Activated CD4-positive, alpha-beta memory T cell treated with anti-CD3 and anti-CD28 coated beads, Interleukin-2, amount 10 ng/mL, durations not matched to agents 7 days and 5 days (primary cell): ENCODE measurements at regions of chr3 and their contacts with region 1.

Region 1: DNA sequence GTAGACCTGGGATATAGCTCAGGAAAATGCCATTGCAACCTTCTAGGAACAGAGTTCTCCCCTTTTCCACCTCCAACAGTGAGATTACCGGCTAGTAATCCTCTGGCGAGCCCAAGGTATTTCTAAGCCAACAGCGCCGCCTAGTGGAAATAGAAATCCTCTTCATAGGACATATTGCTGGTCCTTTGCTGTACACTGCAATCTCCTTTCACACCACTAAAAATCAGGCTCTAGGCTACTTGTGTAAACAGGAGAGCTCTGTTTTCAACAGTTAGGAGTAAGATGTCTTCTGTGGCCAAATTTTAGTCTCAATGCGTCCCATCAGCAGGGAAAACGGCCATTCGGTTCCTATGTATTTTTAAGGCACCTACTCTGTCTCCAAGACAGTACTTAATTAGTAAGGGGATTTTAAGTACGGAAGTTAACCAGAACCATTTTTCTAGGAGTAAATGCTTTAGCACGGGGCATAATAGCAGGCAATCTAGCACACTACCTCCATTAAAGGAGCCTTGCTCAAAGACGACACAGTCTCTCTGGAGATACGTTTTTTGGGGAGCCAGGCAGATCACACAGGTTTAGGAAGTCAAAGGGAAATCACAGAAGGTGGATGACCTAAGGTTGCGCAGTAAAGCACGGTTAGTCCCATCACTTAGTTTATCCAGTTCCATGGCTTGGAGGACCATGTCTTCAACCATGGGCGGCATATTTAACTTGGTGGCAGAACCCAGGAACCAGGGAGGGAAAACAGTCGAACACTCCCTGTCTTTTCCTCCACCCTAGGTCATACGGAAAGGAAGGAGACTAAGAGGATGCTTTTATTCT is 43.8 kb downstream of the NCEH1 start:
- DNase-seq: peak; percentile 84
- H3K4me3 Mint-ChIP-seq: no peak overlapping the region
- H3K27ac Mint-ChIP-seq: no peak overlapping the region
- H3K4me1 Mint-ChIP-seq: peaks cover 22% of the 10 kb centered on the region
- H3K27me3 Mint-ChIP-seq: no peaks in the 10 kb centered on the region

Region 2: DNA sequence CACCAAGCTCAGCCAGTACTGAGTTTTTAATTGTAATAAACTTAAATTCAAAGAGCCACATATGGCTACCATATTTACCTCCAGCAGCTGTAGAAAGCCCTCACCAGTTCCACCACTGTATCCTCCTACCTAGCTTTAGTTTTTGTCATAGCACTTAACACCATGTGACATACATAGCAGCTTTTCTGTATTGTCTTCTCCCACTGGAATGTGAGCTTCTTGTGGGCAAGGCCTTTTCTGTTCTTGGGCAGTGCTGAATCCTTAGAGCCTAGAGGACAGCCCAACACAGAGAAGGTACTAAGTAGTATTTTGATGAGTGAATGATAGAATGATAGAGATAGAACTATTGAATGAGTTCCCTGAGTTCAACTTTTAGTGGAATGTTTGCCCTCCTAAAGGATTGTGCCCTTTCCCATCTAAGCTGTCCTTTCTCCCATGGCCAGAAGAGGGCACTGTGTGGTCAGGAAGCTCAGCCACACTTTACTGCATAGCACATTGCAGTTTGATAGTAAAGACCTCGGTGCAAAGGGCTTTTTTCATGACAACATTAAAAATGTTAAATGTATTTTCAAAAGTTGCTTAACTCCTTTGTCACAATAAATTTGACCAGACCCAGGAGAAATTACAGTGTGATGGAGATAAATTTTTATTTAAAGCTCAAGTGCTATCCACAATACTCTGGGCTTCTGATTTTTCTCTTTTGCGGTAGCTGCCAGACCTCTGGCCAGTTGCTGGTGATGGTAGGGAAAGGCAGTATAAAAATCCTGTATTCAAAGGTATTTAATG is 334.6 kb before region 1 on chr3:
- CTCF ChIA-PET with region 1: interaction called, 38 read pairs
- POLR2A ChIA-PET with region 1: no interaction called
- DNase-seq: peak; percentile 55
- H3K4me3 Mint-ChIP-seq: no peak overlapping the region
- H3K27ac Mint-ChIP-seq: no peak overlapping the region
- H3K4me1 Mint-ChIP-seq: peaks cover 10% of the 10 kb centered on the region
- H3K27me3 Mint-ChIP-seq: no peaks in the 10 kb centered on the region

Region 3: GRCh38 chr3:172341482-172342059 is 325.5 kb before region 1 on chr3:
- CTCF ChIA-PET with region 1: interaction called, 44 read pairs
- POLR2A ChIA-PET with region 1: no interaction called
- DNase-seq: no peak
- H3K4me3 Mint-ChIP-seq: no peak overlapping the region
- H3K27ac Mint-ChIP-seq: no peak overlapping the region
- H3K4me1 Mint-ChIP-seq: no peaks in the 10 kb centered on the region
- H3K27me3 Mint-ChIP-seq: no peaks in the 10 kb centered on the region

Region 4: DNA sequence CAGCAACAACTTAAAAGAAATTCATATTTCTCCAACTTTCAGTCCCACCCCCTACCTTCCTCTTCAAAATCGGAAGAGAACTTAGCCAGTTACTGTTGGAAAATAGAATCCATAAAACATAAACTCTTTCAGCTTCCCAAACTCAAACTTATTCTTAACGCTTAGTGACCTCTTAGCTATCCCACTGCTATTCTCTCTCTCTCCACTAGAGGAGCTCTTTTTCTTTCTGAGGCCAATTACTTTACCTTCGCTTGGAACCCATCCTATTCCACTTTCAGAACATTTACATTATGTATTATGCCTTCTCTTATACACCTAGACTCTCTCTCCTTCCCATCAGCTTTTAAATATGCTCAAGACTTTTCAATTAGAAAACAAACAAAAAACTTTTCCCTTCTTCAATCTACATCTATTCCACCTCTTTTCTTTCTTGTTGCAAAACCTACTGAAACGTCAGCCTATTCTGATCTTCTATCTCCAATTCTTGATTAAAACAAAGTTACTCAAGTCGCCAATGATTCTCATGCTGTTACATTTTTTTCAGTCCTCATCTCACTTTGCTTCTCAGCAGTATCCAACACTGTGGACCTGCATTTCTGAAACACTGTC is 205.4 kb before region 1 on chr3:
- CTCF ChIA-PET with region 1: interaction called, 21 read pairs
- POLR2A ChIA-PET with region 1: no interaction called
- DNase-seq: no peak
- H3K4me3 Mint-ChIP-seq: no peak overlapping the region
- H3K27ac Mint-ChIP-seq: no peak overlapping the region
- H3K4me1 Mint-ChIP-seq: peaks cover 4% of the 10 kb centered on the region
- H3K27me3 Mint-ChIP-seq: peaks cover 4% of the 10 kb centered on the region

Region 5: GRCh38 chr3:172607305-172608121 is 59.6 kb before region 1 on chr3:
- CTCF ChIA-PET with region 1: interaction called, 12 read pairs
- POLR2A ChIA-PET with region 1: no interaction called
- DNase-seq: no peak
- H3K4me3 Mint-ChIP-seq: no peak overlapping the region
- H3K27ac Mint-ChIP-seq: no peak overlapping the region
- H3K4me1 Mint-ChIP-seq: peaks cover 3% of the 10 kb centered on the region
- H3K27me3 Mint-ChIP-seq: no peaks in the 10 kb centered on the region

Region 6: GRCh38 chr3:172622916-172623700 is 44.0 kb before region 1 on chr3:
- CTCF ChIA-PET with region 1: interaction called, 22 read pairs
- POLR2A ChIA-PET with region 1: no interaction called
- DNase-seq: peak; percentile 37
- H3K4me3 Mint-ChIP-seq: no peak overlapping the region
- H3K27ac Mint-ChIP-seq: no peak overlapping the region
- H3K4me1 Mint-ChIP-seq: peaks cover 4% of the 10 kb centered on the region
- H3K27me3 Mint-ChIP-seq: no peaks in the 10 kb centered on the region